Sciatic nerve (tissue), 2 donors: ENCODE measurements at regions of chr6 and their contacts with region 1.

Region 1: GRCh38 chr6:3162565-3163247 is 5.4 kb upstream of the TUBB2A start:
- DNase-seq: peak; percentile 80
- ATAC-seq: peak; percentile 82

Region 2: DNA sequence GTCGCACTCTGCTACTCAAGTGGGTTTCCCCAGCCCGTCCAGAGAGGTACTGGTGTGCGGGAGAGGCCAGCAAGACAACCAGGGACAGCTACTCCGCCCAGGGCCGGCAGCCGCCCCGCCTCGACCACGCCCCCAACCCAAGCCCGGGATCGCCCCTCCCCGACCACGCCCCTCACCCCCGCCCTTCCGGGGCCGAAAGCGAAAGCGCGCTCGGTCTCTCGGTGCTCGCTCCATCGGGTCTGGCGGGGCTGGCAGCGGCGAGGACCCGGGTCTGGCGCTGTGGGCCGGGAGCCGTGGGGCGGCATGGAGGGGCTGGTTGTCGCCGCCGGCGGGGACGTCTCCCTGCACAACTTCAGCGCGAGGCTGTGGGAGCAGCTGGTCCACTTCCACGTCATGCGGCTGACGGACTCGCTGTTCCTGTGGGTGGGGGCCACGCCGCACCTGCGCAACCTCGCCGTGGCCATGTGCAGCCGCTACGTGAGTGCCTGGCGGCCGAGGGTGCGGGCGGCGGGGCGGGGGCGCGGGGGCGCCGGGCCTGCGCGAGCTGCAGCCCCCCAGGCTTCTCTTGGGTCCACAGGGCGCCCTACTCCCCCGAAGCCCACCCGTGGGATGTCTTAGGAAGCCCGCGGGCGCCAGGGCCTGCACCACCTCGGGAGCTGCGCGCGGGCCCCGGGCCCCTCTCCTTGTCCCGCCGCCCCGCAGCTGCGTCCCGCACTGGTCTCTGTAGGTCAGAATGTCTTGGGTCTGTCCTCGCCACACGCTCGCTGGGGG is 96.2 kb after region 1 on chr6 and contains the start of gene PSMG4:
- intact Hi-C with region 1: loop called (anchors 10 kb)
- DNase-seq: peak; percentile 99
- ATAC-seq: peak; percentile 98
- total RNA-seq, gene PSMG4: 21.2 TPM